ENCODE measurements at regions of chr19 and their contacts with region 1.

Region 1: DNA sequence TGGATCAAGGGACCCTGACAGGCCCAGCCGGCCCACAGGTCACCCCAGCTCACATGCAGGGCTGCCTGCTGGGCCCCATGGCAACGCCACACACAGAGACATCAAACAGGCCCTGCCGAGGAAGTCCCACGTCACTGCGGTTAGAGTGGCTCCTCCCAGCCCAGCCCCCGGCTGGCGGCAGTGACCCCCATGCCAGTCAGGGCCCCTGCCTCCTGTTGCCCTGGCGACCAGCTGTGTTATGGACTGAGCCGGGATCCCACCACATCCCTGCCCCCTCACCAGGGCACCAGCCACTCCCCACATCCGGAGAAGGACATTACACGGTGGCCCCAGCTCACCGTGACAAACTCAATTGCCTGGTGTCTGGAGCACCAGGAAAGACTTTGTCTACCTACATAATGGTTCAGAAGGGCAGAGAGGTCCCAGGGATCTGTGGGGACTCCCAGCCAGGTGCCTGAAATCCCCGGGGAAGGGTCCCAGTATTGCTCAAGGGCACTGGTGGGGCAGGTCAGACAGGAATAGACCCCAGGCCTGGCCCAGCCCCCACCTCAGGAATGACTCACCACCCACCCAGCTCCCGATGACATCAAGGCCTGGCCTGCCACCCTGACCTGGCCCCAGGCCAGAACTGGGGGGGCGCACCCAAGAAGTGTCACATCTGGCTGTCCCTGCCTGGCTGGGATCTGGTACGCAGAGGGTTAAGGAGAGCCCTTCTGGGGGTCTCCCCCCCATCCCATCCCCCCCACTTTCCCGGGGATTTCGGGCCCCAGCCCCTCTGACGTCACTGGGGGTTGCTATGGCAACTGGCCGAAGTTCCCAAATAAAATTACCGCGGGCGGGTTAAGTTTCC is 30.2 kb upstream of the NANOS3 start:
- DNase-seq: peak; percentile 98
- ATAC-seq: peak; percentile 58
- H3K4me3 ChIP-seq: peak overlapping the region in 4 of 5 experiments; percentile 48 to 72 (median 50)
- H3K4me3 Mint-ChIP-seq: peak overlapping the region; percentile 89
- H3K27ac ChIP-seq: peak overlapping the region; percentile 91 to 98
- H3K27ac Mint-ChIP-seq: peak overlapping the region; percentile 99
- H3K4me1 ChIP-seq: peaks cover 51 to 63% of the 10 kb centered on the region in 2 donors
- H3K4me1 Mint-ChIP-seq: peaks cover 57% of the 10 kb centered on the region
- H3K27me3 ChIP-seq: peaks cover 0 to 22% (median 0%) of the 10 kb centered on the region in 4 experiments
- H3K27me3 Mint-ChIP-seq: no peaks in the 10 kb centered on the region
- CTCF ChIP-seq: no peak

Region 2: GRCh38 chr19:13150187-13150930 is 696.4 kb before region 1 on chr19 and contains the starts of genes IER2 and STX10:
- CTCF ChIA-PET with region 1: no interaction called
- POLR2A ChIA-PET with region 1: interaction called, 3 read pairs
- intact Hi-C with region 1: loop called (anchors 2 kb)
- DNase-seq: peak; percentile 96
- ATAC-seq: peak; percentile 53
- H3K4me3 ChIP-seq: peak within 1 kb of the TSS; percentile 82 to 100 (median 98)
- H3K4me3 Mint-ChIP-seq: peak within 1 kb of the TSS; percentile 92
- H3K27ac ChIP-seq: peak within 1 kb of the TSS; percentile 87 to 96
- H3K27ac Mint-ChIP-seq: peak within 1 kb of the TSS; percentile 94
- H3K4me1 ChIP-seq: peaks cover 9 to 32% of the 10 kb centered on the region in 2 donors
- H3K4me1 Mint-ChIP-seq: peaks cover 33% of the 10 kb centered on the region
- H3K27me3 ChIP-seq: no peaks in the 10 kb centered on the region
- H3K27me3 Mint-ChIP-seq: no peaks in the 10 kb centered on the region
- CTCF ChIP-seq: peak; percentile 66
- total RNA-seq, gene IER2: 181 and 189 TPM in 2 replicates
- total RNA-seq, gene STX10: 48.4 and 59.0 TPM in 2 replicates

Region 3: DNA sequence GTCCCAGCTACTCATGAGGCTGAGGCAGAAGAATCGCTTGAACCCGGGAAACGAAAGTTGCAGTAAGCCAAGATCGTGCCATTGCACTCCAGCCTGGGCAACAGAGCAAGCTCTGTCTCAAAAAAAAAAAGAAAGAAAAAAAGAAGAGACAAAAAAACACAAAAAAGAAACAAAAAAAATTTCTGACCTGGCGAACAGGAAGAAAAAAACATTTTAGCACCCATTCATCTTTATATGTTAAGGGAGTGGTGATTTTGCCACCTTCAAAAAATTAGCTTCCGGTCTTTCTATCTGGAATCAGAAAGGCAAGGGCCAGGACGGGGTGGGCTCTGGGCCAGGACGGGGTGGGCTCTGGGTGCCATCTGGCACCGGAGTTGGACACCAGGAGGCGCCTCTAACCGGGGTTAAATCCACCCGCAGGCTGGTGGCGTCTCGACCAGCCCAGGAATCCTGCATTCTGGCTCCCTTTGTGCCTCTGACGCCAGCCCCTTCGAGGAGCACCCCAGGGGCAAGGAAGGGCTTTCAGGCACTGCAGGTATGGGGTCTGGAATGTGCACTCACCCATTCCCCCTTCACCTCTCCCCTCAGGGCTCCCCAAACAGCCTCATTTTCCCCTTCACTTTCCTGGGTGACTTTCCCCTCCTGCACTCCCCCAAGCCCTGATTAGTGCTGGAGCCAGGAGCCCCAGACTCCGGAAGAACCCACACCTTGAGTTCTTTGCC is 61.9 kb before region 1 on chr19:
- CTCF ChIA-PET with region 1: interaction called, 9 read pairs
- POLR2A ChIA-PET with region 1: interaction called, 18 read pairs
- intact Hi-C with region 1: no loop called
- DNase-seq: peak; percentile 76
- ATAC-seq: peak; percentile 71
- H3K4me3 ChIP-seq: no peak overlapping the region
- H3K4me3 Mint-ChIP-seq: peak overlapping the region; percentile 62
- H3K27ac ChIP-seq: no peak overlapping the region
- H3K27ac Mint-ChIP-seq: peak overlapping the region; percentile 42
- H3K4me1 ChIP-seq: peaks cover 33 to 53% of the 10 kb centered on the region in 2 donors
- H3K4me1 Mint-ChIP-seq: peaks cover 37% of the 10 kb centered on the region
- H3K27me3 ChIP-seq: no peaks in the 10 kb centered on the region
- H3K27me3 Mint-ChIP-seq: no peaks in the 10 kb centered on the region
- CTCF ChIP-seq: peak; percentile 78

Region 4: GRCh38 chr19:13794757-13795589 is 51.8 kb before region 1 on chr19 and contains the start of gene ZSWIM4:
- CTCF ChIA-PET with region 1: interaction called, 4 read pairs
- POLR2A ChIA-PET with region 1: interaction called, 16 read pairs
- intact Hi-C with region 1: no loop called
- DNase-seq: peak; percentile 97
- ATAC-seq: peak; percentile 95
- H3K4me3 ChIP-seq: peak within 1 kb of the TSS; percentile 44 to 81 (median 68)
- H3K4me3 Mint-ChIP-seq: peak within 1 kb of the TSS; percentile 98
- H3K27ac ChIP-seq: peak within 1 kb of the TSS; percentile 58 to 82
- H3K27ac Mint-ChIP-seq: peak within 1 kb of the TSS; percentile 95
- H3K4me1 ChIP-seq: peaks cover 21 to 26% of the 10 kb centered on the region in 2 donors
- H3K4me1 Mint-ChIP-seq: peaks cover 36% of the 10 kb centered on the region
- H3K27me3 ChIP-seq: no peaks in the 10 kb centered on the region
- H3K27me3 Mint-ChIP-seq: no peaks in the 10 kb centered on the region
- CTCF ChIP-seq: no peak
- total RNA-seq, gene ZSWIM4: 10.1 and 10.6 TPM in 2 replicates

Region 5: DNA sequence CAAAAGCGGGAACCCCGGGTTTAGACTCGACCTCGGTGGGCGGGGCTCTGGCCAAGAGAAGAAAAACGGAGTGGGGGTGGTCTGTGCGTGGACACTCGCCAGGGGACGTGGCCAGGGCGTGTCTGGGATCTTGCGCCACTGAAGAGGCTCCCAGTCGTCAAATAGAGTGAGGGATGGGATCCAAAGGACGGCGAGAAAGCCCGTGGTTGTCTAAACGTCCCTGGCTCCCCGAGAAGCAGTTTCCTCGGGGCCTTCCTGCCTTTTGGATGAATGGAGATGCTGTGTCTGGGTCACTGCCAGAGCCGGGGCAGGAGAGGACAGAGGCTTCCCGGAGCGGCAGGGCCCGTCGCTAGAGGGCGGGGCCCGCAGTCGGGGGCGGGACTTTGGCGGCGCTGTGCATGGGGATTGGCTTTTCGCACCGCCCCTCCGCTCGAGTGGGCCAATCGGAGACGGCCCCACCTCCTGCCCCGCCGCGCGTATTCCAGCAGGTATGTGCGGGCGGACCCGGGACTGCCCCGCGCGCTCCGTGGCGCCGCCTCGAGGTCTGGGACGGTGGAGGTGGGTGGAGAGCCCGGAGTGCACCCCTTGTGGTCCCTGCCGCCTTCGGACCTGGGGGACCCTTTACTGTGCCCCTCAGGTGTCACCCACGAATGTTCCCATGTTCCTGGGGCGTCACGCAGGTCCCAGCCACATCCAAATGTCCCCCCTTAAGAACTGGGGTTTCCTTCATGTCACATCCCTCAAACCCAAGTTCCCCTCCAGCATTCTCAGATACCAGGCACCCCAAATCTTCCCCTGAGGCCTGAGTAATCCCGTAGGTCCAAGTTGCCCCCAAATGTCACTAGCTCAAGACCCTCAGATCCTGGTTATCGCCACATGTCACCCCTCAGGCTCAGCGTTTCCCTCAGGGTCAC is 13.2 kb before region 1 on chr19:
- CTCF ChIA-PET with region 1: interaction called, 21 read pairs
- POLR2A ChIA-PET with region 1: interaction called, 45 read pairs
- intact Hi-C with region 1: no loop called
- DNase-seq: peak; percentile 96
- ATAC-seq: peak; percentile 87
- H3K4me3 ChIP-seq: peak overlapping the region; percentile 28 to 77 (median 69)
- H3K4me3 Mint-ChIP-seq: peak overlapping the region; percentile 88
- H3K27ac ChIP-seq: peak overlapping the region; percentile 58 to 81
- H3K27ac Mint-ChIP-seq: peak overlapping the region; percentile 86
- H3K4me1 ChIP-seq: peaks cover 39 to 45% of the 10 kb centered on the region in 2 donors
- H3K4me1 Mint-ChIP-seq: peaks cover 38% of the 10 kb centered on the region
- H3K27me3 ChIP-seq: no peaks in the 10 kb centered on the region
- H3K27me3 Mint-ChIP-seq: no peaks in the 10 kb centered on the region
- CTCF ChIP-seq: peak; percentile 73

Region 6: DNA sequence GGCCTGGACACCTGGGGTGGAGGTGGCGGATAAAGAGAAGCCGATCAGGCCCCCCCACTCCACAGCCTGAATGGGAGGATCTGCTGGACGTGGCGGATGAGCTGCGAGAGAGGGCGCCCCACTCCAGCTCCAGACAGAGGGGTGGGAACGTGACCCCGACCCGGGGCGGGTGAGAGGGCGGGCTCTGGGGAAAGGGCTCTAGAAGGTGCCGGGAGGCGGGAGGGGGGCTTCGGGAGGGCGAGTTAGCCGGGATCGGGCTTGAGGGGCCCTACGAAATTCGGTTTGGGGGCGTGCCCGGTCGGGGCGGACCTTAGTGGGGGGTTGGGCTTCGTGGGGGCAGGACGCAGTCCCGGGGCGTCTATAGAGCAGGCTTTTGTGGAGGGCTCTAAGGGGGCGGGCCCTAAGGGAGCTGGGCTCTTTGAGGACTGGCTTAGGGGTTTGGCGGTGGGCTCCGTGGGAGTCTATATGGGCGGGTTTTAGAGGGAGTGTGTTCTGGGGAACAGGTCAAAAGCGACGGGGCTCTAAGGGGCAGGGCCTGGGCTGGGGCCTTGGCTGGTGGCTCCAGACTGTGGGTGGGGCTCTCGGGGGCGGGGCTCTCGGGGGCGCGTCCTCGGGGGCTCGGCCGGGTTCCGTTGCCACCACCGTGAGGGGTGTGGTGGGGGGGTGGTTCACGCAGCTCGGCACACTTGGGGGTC is 26.1 kb after region 1 on chr19:
- CTCF ChIA-PET with region 1: no interaction called
- POLR2A ChIA-PET with region 1: interaction called, 14 read pairs
- intact Hi-C with region 1: no loop called
- DNase-seq: peak; percentile 67
- ATAC-seq: peak; percentile 83
- H3K4me3 ChIP-seq: peak overlapping the region in 4 of 5 experiments; percentile 13 to 63 (median 37)
- H3K4me3 Mint-ChIP-seq: peak overlapping the region; percentile 83
- H3K27ac ChIP-seq: no peak overlapping the region
- H3K27ac Mint-ChIP-seq: no peak overlapping the region
- H3K4me1 ChIP-seq: peaks cover 12 to 13% of the 10 kb centered on the region in 2 donors
- H3K4me1 Mint-ChIP-seq: peaks cover 7% of the 10 kb centered on the region
- H3K27me3 ChIP-seq: peaks cover 0 to 59% (median 2%) of the 10 kb centered on the region in 4 experiments
- H3K27me3 Mint-ChIP-seq: peaks cover 27% of the 10 kb centered on the region
- CTCF ChIP-seq: no peak

Region 7: DNA sequence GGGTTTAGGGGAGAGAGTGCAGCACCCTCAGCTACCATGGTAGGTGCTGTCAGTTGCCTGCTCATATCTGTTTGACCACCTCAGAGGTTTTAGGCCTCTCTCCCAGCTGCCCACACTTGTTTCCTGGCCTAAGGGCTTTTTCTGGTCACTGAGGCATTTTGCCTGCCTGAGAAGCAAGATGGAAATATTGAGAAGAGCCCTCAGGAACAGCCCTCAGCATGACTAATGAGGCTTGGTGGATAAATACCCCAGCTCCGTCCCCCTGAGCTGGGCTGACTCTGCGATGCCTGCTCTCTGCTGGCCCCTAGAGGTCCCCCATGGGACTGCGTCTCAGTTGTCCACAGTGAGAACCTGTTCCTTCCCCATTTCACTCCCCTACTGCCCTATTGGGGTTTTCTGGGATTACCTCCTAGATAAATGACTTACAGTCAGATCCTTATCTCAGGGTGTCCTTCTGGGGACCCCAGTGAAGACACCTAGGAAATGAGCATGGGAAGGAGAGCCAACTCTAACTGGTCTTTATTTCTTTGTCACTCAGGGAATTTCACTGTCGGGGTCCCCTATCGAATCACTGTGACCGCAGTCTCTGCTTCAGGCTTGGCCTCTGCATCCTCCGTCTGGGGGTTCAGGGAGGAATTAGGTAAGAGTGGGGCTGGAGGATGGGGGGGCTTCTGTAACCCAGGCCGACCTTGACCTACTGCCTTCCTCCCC is 201.8 kb after region 1 on chr19:
- CTCF ChIA-PET with region 1: no interaction called
- POLR2A ChIA-PET with region 1: no interaction called
- intact Hi-C with region 1: no loop called
- DNase-seq: peak; percentile 80
- ATAC-seq: peak; percentile 92
- H3K4me3 ChIP-seq: no peak overlapping the region
- H3K4me3 Mint-ChIP-seq: no peak overlapping the region
- H3K27ac ChIP-seq: no peak overlapping the region
- H3K27ac Mint-ChIP-seq: no peak overlapping the region
- H3K4me1 ChIP-seq: no peaks in the 10 kb centered on the region
- H3K4me1 Mint-ChIP-seq: no peaks in the 10 kb centered on the region
- H3K27me3 ChIP-seq: no peaks in the 10 kb centered on the region
- H3K27me3 Mint-ChIP-seq: no peaks in the 10 kb centered on the region
- CTCF ChIP-seq: peak; percentile 95